ENCODE measurements at regions of chr7 and their contacts with region 1.

Region 1: GRCh38 chr7:8564281-8564680 is 130.9 kb downstream of the NXPH1 start:
- DNase-seq: no peak
- ATAC-seq: no peak
- H3K4me3 ChIP-seq: no peak overlapping the region
- H3K27ac ChIP-seq: no peak overlapping the region
- H3K4me1 ChIP-seq: no peaks in the 10 kb centered on the region
- H3K27me3 ChIP-seq: no peaks in the 10 kb centered on the region
- CTCF ChIP-seq: no peak
- POLR2A ChIP-seq: no peak
- RAD21 ChIP-seq: no peak

Region 2: DNA sequence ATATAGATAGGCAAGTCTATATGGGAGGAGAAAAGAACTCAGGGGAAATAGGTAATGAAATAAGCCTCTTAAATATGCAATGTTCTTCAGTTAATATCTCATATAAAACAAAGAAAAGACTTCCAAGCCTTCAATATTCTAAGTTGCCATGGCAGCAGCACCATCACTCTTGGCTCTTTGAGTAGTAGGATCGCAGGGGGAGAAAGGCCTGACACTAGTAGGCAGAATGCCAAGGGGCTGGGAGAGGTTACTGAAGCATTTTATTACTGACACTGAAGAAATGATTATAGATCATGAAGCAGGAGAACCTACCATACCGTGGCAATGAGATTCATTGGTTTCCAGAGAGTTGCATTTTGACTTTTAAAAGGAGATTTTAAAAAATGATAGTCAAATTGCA is 63.0 kb after region 1 on chr7:
- CTCF ChIA-PET with region 1: no interaction called
- POLR2A ChIA-PET with region 1: no interaction called
- RAD21 ChIA-PET with region 1: no interaction called
- intact Hi-C with region 1: loop called (anchors 10 kb)
- DNase-seq: no peak
- ATAC-seq: no peak
- H3K4me3 ChIP-seq: no peak overlapping the region
- H3K27ac ChIP-seq: no peak overlapping the region
- H3K4me1 ChIP-seq: no peaks in the 10 kb centered on the region
- H3K27me3 ChIP-seq: no peaks in the 10 kb centered on the region
- CTCF ChIP-seq: no peak
- POLR2A ChIP-seq: no peak
- RAD21 ChIP-seq: no peak